ENCODE measurements at regions of chr5 and their contacts with region 1.

Region 1: GRCh38 chr5:179023528-179024430 is at the start of gene ZNF879:
- DNase-seq: peak; percentile 88 to 96 (median 94)
- ATAC-seq: peak; percentile 97
- H3K4me3 ChIP-seq: peak within 1 kb of the TSS; percentile 63
- H3K4me3 Mint-ChIP-seq: peak within 1 kb of the TSS; percentile 87 to 99 (median 95)
- H3K27ac ChIP-seq: peak within 1 kb of the TSS; percentile 75
- H3K27ac Mint-ChIP-seq: peak within 1 kb of the TSS; percentile 77 to 94 (median 90)
- H3K4me1 ChIP-seq: peaks cover 8% of the 10 kb centered on the region in 2 donors
- H3K4me1 Mint-ChIP-seq: peaks cover 5 to 18% (median 13%) of the 10 kb centered on the region in 7 donors
- H3K27me3 ChIP-seq: no peaks in the 10 kb centered on the region
- H3K27me3 Mint-ChIP-seq: peaks cover 0 to 6% (median 5%) of the 10 kb centered on the region in 5 donors
- total RNA-seq, gene ZNF879: 4.2 to 20.0 (median 7.9) TPM

Region 2: GRCh38 chr5:178732281-178732680 is 291.5 kb before region 1 on chr5:
- CTCF ChIA-PET with region 1: no interaction called
- POLR2A ChIA-PET with region 1: no interaction called
- intact Hi-C with region 1: loop called in 1 of 2 experiments (anchors 1 kb)
- DNase-seq: no peak
- ATAC-seq: no peak
- H3K4me3 ChIP-seq: no peak overlapping the region
- H3K4me3 Mint-ChIP-seq: peak overlapping the region in 1 of 10 donors; percentile 42
- H3K27ac ChIP-seq: no peak overlapping the region
- H3K27ac Mint-ChIP-seq: peak overlapping the region in 1 of 9 donors; percentile 45
- H3K4me1 ChIP-seq: no peaks in the 10 kb centered on the region
- H3K4me1 Mint-ChIP-seq: peaks cover 0 to 13% (median 11%) of the 10 kb centered on the region in 7 donors
- H3K27me3 ChIP-seq: no peaks in the 10 kb centered on the region
- H3K27me3 Mint-ChIP-seq: peaks cover 0 to 3% (median 0%) of the 10 kb centered on the region in 5 donors

Region 3: DNA sequence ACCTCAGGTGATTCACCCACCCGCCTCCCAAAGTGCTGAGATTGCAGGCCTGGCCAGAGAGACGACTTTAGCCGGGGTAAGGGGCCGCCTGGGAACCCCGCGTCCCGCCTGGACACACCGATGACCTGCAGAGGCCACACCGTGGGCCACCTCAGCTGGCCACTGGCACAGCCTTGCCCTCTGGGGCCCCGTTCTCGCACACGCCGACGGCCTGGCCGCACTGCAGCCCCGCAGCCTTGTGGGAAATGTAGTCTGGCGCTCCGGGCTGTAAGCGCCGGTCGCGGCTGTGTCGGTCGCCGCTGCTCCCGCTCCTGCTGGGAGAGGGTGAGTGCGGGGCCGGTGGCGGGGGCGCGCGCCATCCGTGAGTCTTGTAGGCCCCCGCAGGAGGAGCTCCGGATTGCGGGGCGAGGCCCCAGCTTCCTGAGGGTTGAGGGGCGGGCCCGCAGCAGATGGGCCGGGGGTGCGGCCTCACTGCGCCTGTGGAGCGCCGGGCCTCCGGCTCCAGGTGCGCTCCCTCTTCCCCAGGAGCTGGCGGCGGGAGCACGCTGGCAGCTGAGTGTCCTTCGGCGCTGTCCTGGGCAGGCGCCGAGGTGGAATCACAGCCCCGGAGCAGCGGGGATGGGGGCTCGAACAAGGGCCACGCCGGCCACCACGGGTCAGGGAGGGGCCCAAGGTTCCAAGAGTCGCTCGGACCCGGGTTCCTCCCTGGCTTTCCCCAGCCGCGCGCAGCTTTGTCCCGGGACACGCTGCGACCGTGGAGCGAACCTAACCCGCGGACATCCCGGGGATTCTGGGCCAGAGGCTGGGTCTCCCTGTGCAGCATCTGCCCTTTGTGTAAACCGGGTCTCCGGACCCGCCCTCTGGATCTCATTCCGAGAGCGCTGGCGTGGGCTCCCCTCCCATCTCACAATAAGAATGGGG is 127.9 kb before region 1 on chr5 and contains the start of gene ZFP2:
- CTCF ChIA-PET with region 1: no interaction called
- POLR2A ChIA-PET with region 1: no interaction called
- intact Hi-C with region 1: loop called in 1 of 2 experiments (anchors 1 kb)
- DNase-seq: peak in 8 of 9 donors; percentile 4 to 26 (median 12)
- ATAC-seq: peak; percentile 75
- H3K4me3 ChIP-seq: peak within 1 kb of the TSS; percentile 47
- H3K4me3 Mint-ChIP-seq: peak within 1 kb of the TSS; percentile 59 to 93 (median 88)
- H3K27ac ChIP-seq: peak within 1 kb of the TSS; percentile 46
- H3K27ac Mint-ChIP-seq: peak within 1 kb of the TSS in 7 of 9 donors; percentile 32 to 67 (median 56)
- H3K4me1 ChIP-seq: no peaks in the 10 kb centered on the region
- H3K4me1 Mint-ChIP-seq: peaks cover 0 to 12% (median 6%) of the 10 kb centered on the region in 7 donors
- H3K27me3 ChIP-seq: no peaks in the 10 kb centered on the region
- H3K27me3 Mint-ChIP-seq: peaks cover 0 to 7% (median 5%) of the 10 kb centered on the region in 5 donors
- total RNA-seq, gene ZFP2: 0.17 to 3.2 (median 1.0) TPM

Region 4: DNA sequence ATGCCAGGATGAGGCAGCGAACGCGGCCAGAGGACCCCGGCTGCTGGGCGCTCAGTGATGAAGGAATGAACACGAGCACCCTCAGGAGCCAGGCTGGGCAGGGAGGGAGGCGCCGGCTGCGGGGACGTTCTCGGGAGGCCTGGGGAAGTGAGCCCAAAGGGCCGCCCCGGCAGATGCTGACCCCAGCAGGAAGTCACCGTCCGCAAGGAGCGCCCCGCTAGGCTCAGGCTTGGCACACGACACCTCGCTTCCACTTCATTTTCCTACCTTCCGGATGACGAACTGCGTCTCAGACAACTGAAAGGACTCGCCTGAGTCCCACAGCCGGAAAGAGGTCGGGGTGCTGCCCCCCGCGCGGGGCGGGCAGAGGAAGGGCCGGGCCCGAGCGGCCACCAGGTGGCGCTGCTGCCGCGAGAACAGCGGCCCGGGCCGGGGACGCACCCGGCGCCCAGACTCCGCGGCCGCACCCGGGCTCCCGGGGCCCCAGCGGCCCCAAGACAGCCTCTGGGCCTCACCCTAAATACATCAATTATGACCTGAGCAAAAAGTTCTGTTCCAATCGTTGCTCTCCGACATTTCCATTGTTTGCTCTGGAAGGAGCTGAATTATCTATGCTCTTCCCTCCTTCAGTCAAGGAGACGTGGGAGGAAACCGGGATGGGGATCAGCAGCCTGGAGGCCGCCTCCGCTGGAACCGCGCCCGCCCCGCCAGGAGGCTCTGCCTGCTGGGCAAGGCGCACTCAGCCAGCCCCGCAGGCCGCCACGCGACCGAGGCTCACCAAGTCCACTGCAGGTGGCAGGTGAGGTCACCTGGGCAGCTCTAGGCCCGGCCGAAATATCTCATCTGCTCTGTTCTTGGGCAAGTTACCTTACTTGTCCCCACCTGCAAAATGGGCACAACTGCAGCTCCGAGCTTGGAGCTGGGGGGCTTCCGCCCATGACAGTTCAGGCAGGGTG is 143.4 kb after region 1 on chr5:
- CTCF ChIA-PET with region 1: no interaction called
- POLR2A ChIA-PET with region 1: no interaction called
- intact Hi-C with region 1: loop called in 1 of 2 experiments (anchors 2 kb)
- DNase-seq: peak; percentile 39 to 79 (median 64)
- ATAC-seq: peak; percentile 80
- H3K4me3 ChIP-seq: peak overlapping the region; percentile 4
- H3K4me3 Mint-ChIP-seq: peak overlapping the region in 9 of 10 donors; percentile 20 to 73 (median 56)
- H3K27ac ChIP-seq: no peak overlapping the region
- H3K27ac Mint-ChIP-seq: no peak overlapping the region
- H3K4me1 ChIP-seq: no peaks in the 10 kb centered on the region
- H3K4me1 Mint-ChIP-seq: peaks cover 0 to 7% (median 4%) of the 10 kb centered on the region in 7 donors
- H3K27me3 ChIP-seq: no peaks in the 10 kb centered on the region
- H3K27me3 Mint-ChIP-seq: peaks cover 0 to 5% (median 4%) of the 10 kb centered on the region in 5 donors

Region 5: DNA sequence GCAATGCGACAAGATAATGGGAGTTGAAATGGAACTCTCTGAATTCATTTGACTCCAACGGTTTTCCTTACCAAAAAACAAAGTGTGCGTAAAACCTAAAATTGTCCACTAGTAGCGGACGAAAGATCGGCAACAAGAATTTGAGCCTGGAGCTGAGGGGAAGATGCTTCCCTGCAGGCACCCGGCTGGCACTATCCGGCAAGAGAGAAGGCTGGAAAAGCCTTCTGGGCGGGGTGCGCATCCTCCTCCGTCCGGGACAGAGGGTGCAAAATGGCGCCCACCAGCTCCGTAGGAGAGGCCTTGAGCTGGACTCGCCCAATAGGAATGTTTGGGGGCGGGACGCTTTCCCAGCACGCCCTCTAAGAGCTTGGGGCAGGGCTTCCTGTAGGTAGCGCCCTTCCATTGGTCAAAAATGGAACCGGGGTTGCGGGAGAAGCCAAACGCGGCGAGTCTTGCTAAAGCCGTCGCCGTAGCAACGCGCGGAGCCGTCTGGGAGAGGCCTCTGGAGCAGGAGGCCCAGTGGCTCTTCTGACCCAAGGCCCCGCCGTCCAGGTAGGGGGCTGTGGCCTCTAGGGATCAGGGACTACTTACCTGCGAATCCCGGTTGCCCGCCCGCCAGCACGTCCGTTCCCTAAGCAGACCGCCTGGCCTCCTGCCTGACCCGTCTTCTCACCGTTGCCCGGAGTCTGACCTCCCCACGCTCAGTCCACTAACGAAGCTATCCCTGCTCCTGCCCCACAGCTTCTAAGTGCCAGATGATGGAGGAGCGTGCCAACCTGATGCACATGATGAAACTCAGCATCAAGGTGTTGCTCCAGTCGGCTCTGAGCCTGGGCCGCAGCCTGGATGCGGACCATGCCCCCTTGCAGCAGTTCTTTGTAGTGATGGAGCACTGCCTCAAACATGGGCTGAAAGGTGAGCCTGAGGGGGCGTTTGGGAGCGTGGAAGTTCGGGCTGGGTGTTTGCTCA is 535.8 kb after region 1 on chr5:
- CTCF ChIA-PET with region 1: interaction called, 4 read pairs
- POLR2A ChIA-PET with region 1: no interaction called
- intact Hi-C with region 1: loop called (anchors 5 kb)
- DNase-seq: peak; percentile 77 to 97 (median 86)
- ATAC-seq: peak; percentile 100
- H3K4me3 ChIP-seq: peak overlapping the region; percentile 75
- H3K4me3 Mint-ChIP-seq: peak overlapping the region; percentile 85 to 95 (median 91)
- H3K27ac ChIP-seq: peak overlapping the region; percentile 70
- H3K27ac Mint-ChIP-seq: peak overlapping the region; percentile 81 to 96 (median 93)
- H3K4me1 ChIP-seq: peaks cover 3 to 4% of the 10 kb centered on the region in 2 donors
- H3K4me1 Mint-ChIP-seq: peaks cover 11 to 46% (median 32%) of the 10 kb centered on the region in 7 donors
- H3K27me3 ChIP-seq: no peaks in the 10 kb centered on the region
- H3K27me3 Mint-ChIP-seq: no peaks in the 10 kb centered on the region

Measured in naive thymus-derived CD4-positive, alpha-beta T cell (primary cell).